Activated CD4-positive, alpha-beta T cell treated with anti-CD3 and anti-CD28 coated beads, Interleukin-2, amount 10 ng/mL, durations not matched to agents 24 days and 14 days (primary cell): ENCODE measurements at regions of chr5 and their contacts with region 1.

Region 1: GRCh38 chr5:59188419-59189225 is 605.7 kb downstream of the RAB3C start:
- DNase-seq: peak; percentile 88
- H3K4me3 Mint-ChIP-seq: peak overlapping the region; percentile 52
- H3K27ac Mint-ChIP-seq: no peak overlapping the region
- H3K4me1 Mint-ChIP-seq: peaks cover 7% of the 10 kb centered on the region
- H3K27me3 Mint-ChIP-seq: peaks cover 45% of the 10 kb centered on the region

Region 2: DNA sequence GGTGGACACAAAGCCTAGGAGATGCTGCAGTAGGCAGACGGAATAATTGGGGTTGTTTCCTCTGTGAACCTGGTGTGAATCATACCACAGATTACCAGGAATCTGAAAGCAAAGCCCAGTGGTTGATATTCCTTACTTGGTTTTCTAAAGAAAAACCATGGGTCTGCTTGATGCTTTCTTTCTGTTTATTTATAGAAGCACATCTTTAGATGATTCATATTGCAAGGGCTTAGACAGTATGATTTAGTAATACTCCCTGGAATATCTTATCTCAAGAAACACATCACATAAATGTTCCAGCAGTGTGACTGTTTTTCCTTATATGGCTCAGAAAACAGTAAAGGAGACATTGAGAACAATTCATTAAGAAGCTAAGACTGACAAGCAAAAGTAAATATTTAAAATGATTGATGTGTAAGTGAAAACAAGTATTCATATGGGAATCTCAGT is 17.5 kb after region 1 on chr5:
- intact Hi-C with region 1: no loop called
- DNase-seq: no peak
- H3K4me3 Mint-ChIP-seq: no peak overlapping the region
- H3K27ac Mint-ChIP-seq: no peak overlapping the region
- H3K4me1 Mint-ChIP-seq: peaks cover 8% of the 10 kb centered on the region
- H3K27me3 Mint-ChIP-seq: peaks cover 14% of the 10 kb centered on the region

Region 3: GRCh38 chr5:59264639-59265240 is 76.1 kb after region 1 on chr5:
- intact Hi-C with region 1: no loop called
- DNase-seq: no peak
- H3K4me3 Mint-ChIP-seq: no peak overlapping the region
- H3K27ac Mint-ChIP-seq: no peak overlapping the region
- H3K4me1 Mint-ChIP-seq: no peaks in the 10 kb centered on the region
- H3K27me3 Mint-ChIP-seq: peaks cover 29% of the 10 kb centered on the region

Region 4: DNA sequence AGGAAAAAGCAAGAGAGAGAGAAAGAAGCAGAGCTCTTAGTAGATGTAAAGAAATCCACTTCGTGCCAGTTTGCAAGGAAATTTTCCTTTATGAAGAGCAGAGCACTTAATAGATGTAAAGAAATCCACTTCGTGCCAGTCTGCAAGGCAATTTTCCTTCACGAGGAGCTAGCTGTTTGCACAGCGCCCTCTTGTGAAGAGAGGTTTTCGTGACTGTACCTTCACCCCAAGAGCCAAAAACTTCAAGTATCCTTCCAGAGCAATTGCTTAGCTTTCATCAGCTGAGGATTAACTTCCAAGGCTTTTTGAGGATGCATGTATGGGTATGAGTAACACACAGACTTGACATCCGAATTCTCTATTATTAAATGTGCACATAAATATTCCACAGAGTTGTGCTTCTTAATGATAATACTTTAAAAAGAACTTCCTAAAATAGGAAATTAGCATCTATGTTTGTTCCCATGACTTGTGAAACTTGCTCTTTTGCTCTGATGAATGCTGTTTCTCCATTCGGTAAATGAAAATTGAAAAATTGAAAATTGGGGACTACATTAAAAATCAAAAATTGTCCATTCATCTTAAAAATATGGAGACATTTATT is 179.3 kb after region 1 on chr5:
- intact Hi-C with region 1: loop called (anchors 1 kb)
- DNase-seq: peak; percentile 84
- H3K4me3 Mint-ChIP-seq: no peak overlapping the region
- H3K27ac Mint-ChIP-seq: no peak overlapping the region
- H3K4me1 Mint-ChIP-seq: no peaks in the 10 kb centered on the region
- H3K27me3 Mint-ChIP-seq: peaks cover 44% of the 10 kb centered on the region

Region 5: DNA sequence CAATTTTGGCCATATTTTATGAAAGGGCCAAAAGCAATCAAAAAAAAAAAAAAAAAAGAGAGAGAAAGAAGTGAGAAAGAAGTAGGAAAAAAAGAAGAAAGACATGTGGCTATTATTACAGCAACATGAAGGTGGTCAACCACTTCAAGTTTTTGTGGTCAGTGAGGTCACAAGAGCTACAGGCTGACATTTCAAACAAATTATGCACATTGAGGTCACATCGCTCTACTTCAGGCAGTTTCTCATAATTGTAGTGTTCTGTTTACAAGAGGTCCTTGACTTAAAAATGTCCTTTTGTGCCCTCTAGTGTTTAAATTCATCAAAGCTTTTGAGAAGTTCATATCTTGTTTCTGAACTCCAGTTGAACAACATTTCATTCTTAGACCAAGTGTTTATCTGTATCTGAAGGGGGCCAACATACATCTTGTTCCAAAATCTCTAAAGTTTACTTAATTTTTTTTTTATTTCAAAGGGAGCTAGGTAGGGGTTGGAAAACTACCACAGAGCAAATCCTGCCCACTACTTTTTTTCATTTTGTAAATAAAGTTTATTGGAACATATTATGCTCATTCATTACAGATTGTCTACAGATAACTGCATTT is 191.8 kb after region 1 on chr5:
- intact Hi-C with region 1: loop called (anchors 1 kb)
- DNase-seq: peak; percentile 70
- H3K4me3 Mint-ChIP-seq: no peak overlapping the region
- H3K27ac Mint-ChIP-seq: no peak overlapping the region
- H3K4me1 Mint-ChIP-seq: peaks cover 5% of the 10 kb centered on the region
- H3K27me3 Mint-ChIP-seq: peaks cover 16% of the 10 kb centered on the region

Region 6: DNA sequence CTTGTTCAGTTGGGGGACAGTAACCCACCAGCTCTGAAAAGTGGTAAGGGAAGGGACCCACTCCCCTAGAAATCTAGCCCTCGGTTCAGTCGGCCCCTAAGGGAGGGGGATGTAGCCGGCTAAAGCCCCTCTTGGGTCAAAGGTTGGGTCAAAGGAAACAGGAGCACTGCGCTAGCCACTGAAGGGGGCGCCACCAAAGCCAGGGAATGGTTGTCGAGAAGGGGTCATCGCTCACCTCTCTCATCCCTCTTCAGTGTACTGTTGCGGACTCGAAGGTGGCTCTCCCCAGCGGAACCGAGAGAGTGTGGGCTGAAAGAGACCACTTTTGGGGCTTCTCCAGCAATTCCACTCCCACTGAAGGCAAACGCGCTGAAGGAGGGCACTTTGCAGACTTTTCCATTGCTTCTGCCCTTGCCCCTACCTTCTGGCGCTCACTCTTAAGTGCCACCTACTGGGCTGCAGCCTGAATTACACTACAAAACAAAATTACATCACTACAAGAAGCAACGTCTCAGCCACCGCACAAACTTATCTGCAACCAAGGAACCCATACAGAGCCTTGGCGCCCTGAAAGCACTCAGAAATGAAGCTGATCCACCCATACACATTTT is 308.0 kb after region 1 on chr5:
- intact Hi-C with region 1: loop called (anchors 2 kb)
- DNase-seq: peak; percentile 66
- H3K4me3 Mint-ChIP-seq: no peak overlapping the region
- H3K27ac Mint-ChIP-seq: peak overlapping the region; percentile 18
- H3K4me1 Mint-ChIP-seq: no peaks in the 10 kb centered on the region
- H3K27me3 Mint-ChIP-seq: peaks cover 29% of the 10 kb centered on the region

Region 7: GRCh38 chr5:59673438-59674058 is 484.9 kb after region 1 on chr5:
- intact Hi-C with region 1: loop called (anchors 5 kb)
- DNase-seq: peak; percentile 67
- H3K4me3 Mint-ChIP-seq: no peak overlapping the region
- H3K27ac Mint-ChIP-seq: no peak overlapping the region
- H3K4me1 Mint-ChIP-seq: no peaks in the 10 kb centered on the region
- H3K27me3 Mint-ChIP-seq: peaks cover 22% of the 10 kb centered on the region